ENCODE measurements at regions of chr5 and their contacts with region 1.

Region 1: GRCh38 chr5:96601811-96602244 is 60.3 kb upstream of the CAST start:
- DNase-seq: peak; percentile 73
- H3K4me3 ChIP-seq: no peak overlapping the region
- H3K27ac ChIP-seq: no peak overlapping the region
- H3K4me1 ChIP-seq: no peaks in the 10 kb centered on the region
- CTCF ChIP-seq: peak; percentile 88

Region 2: GRCh38 chr5:95858661-95859326 is 743.0 kb before region 1 on chr5:
- CTCF ChIA-PET with region 1: no interaction called
- POLR2A ChIA-PET with region 1: no interaction called
- intact Hi-C with region 1: loop called (anchors 2 kb)
- DNase-seq: peak; percentile 83
- H3K4me3 ChIP-seq: no peak overlapping the region
- H3K27ac ChIP-seq: no peak overlapping the region
- H3K4me1 ChIP-seq: peaks cover 15% of the 10 kb centered on the region
- CTCF ChIP-seq: peak; percentile 96

Region 3: GRCh38 chr5:96142786-96143434 is 458.9 kb before region 1 on chr5:
- CTCF ChIA-PET with region 1: no interaction called
- POLR2A ChIA-PET with region 1: no interaction called
- intact Hi-C with region 1: no loop called
- DNase-seq: no peak
- H3K4me3 ChIP-seq: no peak overlapping the region
- H3K27ac ChIP-seq: no peak overlapping the region
- H3K4me1 ChIP-seq: no peaks in the 10 kb centered on the region
- CTCF ChIP-seq: no peak

Region 4: DNA sequence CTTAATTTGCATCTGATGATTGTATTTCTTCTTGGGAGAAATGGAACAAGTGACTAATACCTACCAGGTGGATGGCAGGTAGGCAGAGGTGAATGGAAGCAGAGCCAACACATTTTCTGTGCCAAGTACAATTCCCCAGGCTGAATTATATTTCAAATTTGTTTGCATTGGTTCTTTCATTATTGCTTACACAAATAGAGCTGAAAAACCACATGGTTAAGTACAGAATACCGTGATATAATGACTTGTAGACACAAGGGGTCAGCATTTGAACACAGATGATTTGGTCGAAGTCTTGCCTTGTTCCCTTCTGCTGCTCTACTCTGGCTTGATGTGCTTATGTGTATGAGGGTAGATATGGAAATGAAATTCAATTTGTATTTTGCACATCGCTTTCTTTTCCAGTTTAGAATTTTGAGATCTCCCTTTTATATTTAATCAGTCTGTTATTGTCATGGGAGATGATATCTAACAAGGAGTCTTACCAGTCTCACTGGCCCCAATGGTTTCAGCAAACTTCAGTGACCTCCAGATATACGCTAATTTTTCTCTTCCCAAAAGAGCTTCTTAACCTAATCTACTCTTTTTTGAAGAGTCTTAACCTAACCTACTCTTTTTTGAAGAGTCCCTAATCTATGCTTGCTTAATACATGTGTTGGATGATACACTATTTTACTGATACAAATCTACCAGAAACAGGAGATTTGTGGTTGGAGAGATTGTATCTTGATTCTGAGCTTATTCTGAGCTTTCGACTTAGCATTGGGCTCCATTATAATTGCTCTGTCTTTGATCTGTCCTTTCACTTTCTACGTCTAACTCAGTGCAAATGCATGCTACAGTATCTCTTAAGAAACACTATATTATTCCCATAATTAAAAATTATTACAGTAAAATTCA is 256.9 kb before region 1 on chr5:
- CTCF ChIA-PET with region 1: interaction called, 12 read pairs
- POLR2A ChIA-PET with region 1: no interaction called
- intact Hi-C with region 1: loop called (anchors 1 kb)
- DNase-seq: peak; percentile 38
- H3K4me3 ChIP-seq: no peak overlapping the region
- H3K27ac ChIP-seq: no peak overlapping the region
- H3K4me1 ChIP-seq: no peaks in the 10 kb centered on the region
- CTCF ChIP-seq: peak; percentile 67

Region 5: GRCh38 chr5:96439477-96440184 is 162.2 kb before region 1 on chr5:
- CTCF ChIA-PET with region 1: no interaction called
- POLR2A ChIA-PET with region 1: interaction called, 3 read pairs
- intact Hi-C with region 1: loop called (anchors 5 kb)
- DNase-seq: peak; percentile 69
- H3K4me3 ChIP-seq: peak overlapping the region; percentile 41
- H3K27ac ChIP-seq: peak overlapping the region; percentile 70
- H3K4me1 ChIP-seq: peaks cover 17% of the 10 kb centered on the region
- CTCF ChIP-seq: peak; percentile 71